ENCODE measurements at regions of chr10 and their contacts with region 1.

Region 1: DNA sequence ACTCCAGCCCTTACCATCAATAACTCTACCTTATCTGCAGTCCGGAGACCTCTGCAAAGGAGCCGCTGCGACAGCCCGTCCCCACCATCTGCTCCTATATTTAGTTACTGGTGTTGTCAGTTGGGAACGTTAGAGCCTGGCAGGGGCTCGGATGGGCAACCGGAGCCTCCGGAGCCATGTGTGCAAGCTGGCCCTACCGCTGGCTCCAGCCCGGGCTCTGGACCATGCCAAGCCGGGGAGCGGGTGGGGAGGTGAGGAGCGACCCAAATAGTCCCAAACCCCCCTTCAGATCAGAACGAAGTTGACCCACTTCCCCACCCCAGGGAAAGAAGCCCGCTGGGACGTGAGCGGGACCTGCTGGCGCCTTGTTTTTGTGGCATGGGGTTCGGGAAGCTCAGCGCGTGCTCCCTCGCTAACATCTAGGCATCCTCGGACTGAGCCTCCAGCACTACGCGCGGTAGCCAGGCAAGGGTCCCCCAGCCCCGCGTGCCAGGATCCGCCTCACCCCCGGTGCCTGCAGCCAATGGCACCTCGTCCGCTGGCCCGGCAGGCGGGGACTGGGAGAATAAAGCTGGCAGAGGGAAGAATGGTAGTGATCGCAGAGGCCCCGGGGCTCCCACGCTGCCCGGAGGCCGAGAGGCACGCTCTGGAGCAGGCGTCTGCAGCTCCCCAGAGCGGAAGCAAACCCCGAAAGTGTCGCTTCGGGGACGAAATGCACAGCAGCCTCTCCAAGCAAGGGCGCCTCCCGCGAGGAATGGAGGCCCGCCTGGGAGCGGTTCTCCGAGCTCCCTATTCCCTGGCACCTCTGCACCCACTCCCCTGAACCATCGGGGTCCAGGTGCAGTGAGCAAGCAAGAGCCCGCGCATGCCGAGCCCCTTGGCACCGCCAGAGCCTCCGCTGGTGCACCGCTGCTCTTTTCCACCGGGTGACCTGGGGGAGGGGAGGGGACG is 679 bp downstream of the LRRC20 start:
- DNase-seq: no peak
- H3K4me3 ChIP-seq: peak overlapping the region; percentile 52 to 54
- H3K27ac ChIP-seq: peak overlapping the region; percentile 28 to 52
- H3K4me1 ChIP-seq: peaks cover 3% of the 10 kb centered on the region
- H3K27me3 ChIP-seq: no peaks in the 10 kb centered on the region
- CTCF ChIP-seq: peak in 1 of 4 experiments; percentile 12
- POLR2A ChIP-seq: no peak

Region 2: GRCh38 chr10:70403483-70404035 is 21.8 kb after region 1 on chr10:
- intact Hi-C with region 1: loop called (anchors 2 kb)
- DNase-seq: no peak
- H3K4me3 ChIP-seq: peak overlapping the region; percentile 64 to 75
- H3K27ac ChIP-seq: peak overlapping the region; percentile 90 to 94
- H3K4me1 ChIP-seq: no peaks in the 10 kb centered on the region
- H3K27me3 ChIP-seq: no peaks in the 10 kb centered on the region
- CTCF ChIP-seq: no peak
- POLR2A ChIP-seq: no peak

Measured in prostate gland (tissue), 2 donors.